Tibial artery (tissue), 4 donors: ENCODE measurements at regions of chr4 and their contacts with region 1.

Region 1: GRCh38 chr4:35734381-35735098 is 509.8 kb downstream of the ARAP2 start:
- DNase-seq: no peak
- H3K4me3 ChIP-seq: no peak overlapping the region
- H3K27ac ChIP-seq: no peak overlapping the region
- H3K4me1 ChIP-seq: no peaks in the 10 kb centered on the region
- H3K27me3 ChIP-seq: no peaks in the 10 kb centered on the region
- CTCF ChIP-seq: no peak

Region 2: GRCh38 chr4:35772291-35772690 is 37.8 kb after region 1 on chr4:
- intact Hi-C with region 1: loop called (anchors 1 kb)
- DNase-seq: no peak
- H3K4me3 ChIP-seq: no peak overlapping the region
- H3K27ac ChIP-seq: no peak overlapping the region
- H3K4me1 ChIP-seq: no peaks in the 10 kb centered on the region
- H3K27me3 ChIP-seq: no peaks in the 10 kb centered on the region
- CTCF ChIP-seq: no peak

Region 3: GRCh38 chr4:35793045-35793722 is 58.6 kb after region 1 on chr4:
- intact Hi-C with region 1: no loop called
- DNase-seq: no peak
- H3K4me3 ChIP-seq: no peak overlapping the region
- H3K27ac ChIP-seq: no peak overlapping the region
- H3K4me1 ChIP-seq: no peaks in the 10 kb centered on the region
- H3K27me3 ChIP-seq: no peaks in the 10 kb centered on the region
- CTCF ChIP-seq: no peak